ENCODE measurements at regions of chr5 and their contacts with region 1.

Region 1: DNA sequence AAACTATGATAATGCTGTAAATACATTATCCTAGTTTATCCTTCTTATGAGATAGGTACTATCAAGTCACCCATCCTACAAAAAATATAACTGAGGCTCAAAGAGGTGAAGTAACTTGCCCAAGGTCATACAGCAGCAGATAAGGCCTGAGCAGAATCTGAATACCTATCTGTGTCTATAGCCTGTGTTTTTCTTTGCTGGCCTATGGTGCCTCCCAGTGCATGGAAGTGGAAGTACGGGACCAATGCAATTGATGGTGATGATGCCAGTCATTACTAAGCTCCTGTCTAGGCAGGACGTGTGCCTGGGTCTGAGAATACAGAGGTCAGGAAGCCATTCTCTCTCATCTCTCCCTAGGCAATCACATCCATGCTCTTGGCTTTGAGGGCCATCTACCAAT is 67.8 kb downstream of the FAT2 start:
- DNase-seq: peak; percentile 78
- H3K4me3 Mint-ChIP-seq: no peak overlapping the region
- H3K27ac Mint-ChIP-seq: no peak overlapping the region
- H3K4me1 Mint-ChIP-seq: peaks cover 5% of the 10 kb centered on the region
- H3K27me3 Mint-ChIP-seq: no peaks in the 10 kb centered on the region

Region 2: DNA sequence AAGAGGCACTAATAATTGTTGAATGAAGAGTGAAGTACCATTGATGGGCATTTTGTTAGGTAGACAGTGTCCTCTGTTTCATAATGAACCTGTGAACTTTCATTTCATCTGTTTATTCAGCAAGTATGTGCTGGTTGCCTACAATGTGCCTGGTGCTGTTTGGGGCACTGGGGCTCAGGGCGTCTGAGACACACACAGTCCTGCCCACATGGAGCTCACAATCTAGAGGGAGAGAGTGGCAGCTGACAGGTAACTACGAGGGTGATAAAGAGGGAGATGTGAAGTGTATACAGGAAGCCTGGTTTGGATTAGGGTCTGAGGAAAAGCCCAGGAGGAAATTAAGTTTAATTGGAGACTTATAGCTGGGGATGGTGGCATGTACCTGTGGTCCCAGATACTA is 1043.9 kb before region 1 on chr5:
- CTCF ChIA-PET with region 1: no interaction called
- intact Hi-C with region 1: loop called (anchors 5 kb)
- DNase-seq: no peak
- H3K4me3 Mint-ChIP-seq: no peak overlapping the region
- H3K27ac Mint-ChIP-seq: no peak overlapping the region
- H3K4me1 Mint-ChIP-seq: no peaks in the 10 kb centered on the region
- H3K27me3 Mint-ChIP-seq: peaks cover 2% of the 10 kb centered on the region